ENCODE measurements at regions of chr9 and their contacts with region 1.

Region 1: GRCh38 chr9:136790927-136791641 is at the start of gene TMEM141:
- DNase-seq: peak; percentile 99
- ATAC-seq: peak; percentile 87
- H3K4me3 Mint-ChIP-seq: peak within 1 kb of the TSS; percentile 86
- H3K27ac Mint-ChIP-seq: peak within 1 kb of the TSS; percentile 90
- H3K4me1 Mint-ChIP-seq: peaks cover 21% of the 10 kb centered on the region
- H3K27me3 Mint-ChIP-seq: no peaks in the 10 kb centered on the region
- CTCF ChIP-seq: no peak
- total RNA-seq, gene TMEM141: 34.9 and 35.8 TPM in 2 replicates

Region 2: GRCh38 chr9:136807281-136808074 is 16.4 kb after region 1 on chr9 and contains the start of gene RABL6:
- CTCF ChIA-PET with region 1: interaction called, 3 read pairs
- POLR2A ChIA-PET with region 1: interaction called, 4 read pairs
- intact Hi-C with region 1: loop called (anchors 1 kb)
- DNase-seq: peak; percentile 86
- ATAC-seq: peak; percentile 87
- H3K4me3 Mint-ChIP-seq: peak within 1 kb of the TSS; percentile 88
- H3K27ac Mint-ChIP-seq: peak within 1 kb of the TSS; percentile 87
- H3K4me1 Mint-ChIP-seq: peaks cover 31% of the 10 kb centered on the region
- H3K27me3 Mint-ChIP-seq: no peaks in the 10 kb centered on the region
- CTCF ChIP-seq: no peak
- total RNA-seq, gene RABL6: 70.1 and 75.0 TPM in 2 replicates

Region 3: DNA sequence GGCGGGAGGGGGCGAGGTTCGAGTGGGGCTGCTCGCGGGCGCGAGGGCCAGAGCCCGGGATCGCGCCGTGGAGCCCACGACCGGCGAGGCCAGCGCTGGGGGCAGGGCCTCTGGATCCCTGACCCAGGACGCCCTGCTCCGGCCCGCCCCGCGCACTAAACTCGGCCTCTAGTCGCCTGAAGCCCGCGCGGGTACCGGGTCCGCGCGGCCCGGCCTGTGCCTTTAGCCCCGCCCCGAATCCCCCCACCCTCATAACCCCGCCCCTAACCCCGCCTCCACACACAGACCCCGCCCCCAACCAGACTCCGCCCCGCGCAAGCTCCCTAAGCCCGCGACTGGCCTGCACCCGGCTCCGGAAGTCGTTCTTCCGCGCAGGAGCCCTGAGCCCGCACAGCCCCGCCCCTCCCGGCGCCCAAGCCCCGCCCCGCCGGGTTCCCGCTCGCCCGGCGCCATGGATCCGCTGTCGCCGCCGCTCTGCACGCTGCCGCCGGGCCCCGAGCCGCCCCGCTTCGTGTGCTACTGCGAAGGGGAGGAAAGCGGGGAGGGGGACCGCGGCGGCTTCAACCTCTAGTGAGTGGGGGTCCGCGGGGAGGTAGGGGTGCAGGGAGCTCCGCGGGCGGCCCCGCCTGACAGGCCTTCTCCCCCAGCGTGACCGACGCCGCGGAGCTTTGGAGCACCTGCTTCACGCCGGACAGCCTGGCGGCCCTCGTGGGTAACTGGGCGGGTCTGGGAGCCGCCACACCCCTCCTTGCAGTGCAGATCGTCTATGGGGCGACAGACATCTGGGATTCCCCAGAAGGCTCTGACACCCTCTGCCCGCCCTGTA is 201.1 kb after region 1 on chr9 and contains the start of gene PAXX:
- CTCF ChIA-PET with region 1: no interaction called
- POLR2A ChIA-PET with region 1: no interaction called
- intact Hi-C with region 1: loop called (anchors 2 kb)
- DNase-seq: peak; percentile 94
- ATAC-seq: peak; percentile 91
- H3K4me3 Mint-ChIP-seq: peak within 1 kb of the TSS; percentile 86
- H3K27ac Mint-ChIP-seq: peak within 1 kb of the TSS; percentile 84
- H3K4me1 Mint-ChIP-seq: peaks cover 33% of the 10 kb centered on the region
- H3K27me3 Mint-ChIP-seq: peaks cover 6% of the 10 kb centered on the region
- CTCF ChIP-seq: no peak
- total RNA-seq, gene PAXX: 43.4 and 47.8 TPM in 2 replicates

Region 4: DNA sequence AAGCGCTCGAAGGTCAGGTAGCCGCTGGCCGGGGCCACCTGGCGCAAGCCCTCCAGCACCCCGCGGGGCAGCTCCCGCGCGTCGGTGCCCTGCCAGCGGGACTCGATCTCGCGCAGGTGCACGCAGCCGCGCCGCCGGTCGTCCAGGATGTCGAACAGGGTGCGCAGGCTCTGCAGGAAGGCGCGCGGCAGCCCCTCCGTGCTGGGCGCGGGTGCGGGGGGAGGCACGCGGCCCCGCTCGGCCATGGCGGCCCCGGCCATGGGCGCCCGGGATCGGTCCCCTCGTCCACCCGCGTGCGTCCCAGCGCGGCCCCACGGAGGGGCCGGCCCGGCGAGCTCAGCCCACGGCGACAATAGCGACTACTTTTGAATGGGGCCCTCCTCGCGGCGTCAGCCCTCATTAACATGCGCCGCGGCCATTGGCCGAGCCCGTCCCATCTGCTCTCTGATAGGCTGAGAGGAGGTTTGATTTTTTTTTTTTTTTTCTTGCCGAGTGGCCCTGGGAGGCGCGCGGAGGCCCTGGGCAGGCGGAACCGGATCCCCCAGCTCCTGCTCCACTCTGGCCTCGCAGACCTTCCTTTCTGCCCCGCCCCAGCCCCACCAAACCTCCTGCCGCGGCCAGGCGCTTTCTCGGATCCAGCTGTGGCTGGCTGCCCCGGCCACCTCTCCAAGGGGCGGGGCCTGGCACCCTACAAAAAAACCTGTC is 279.3 kb after region 1 on chr9 and contains the start of gene SAPCD2:
- CTCF ChIA-PET with region 1: interaction called, 11 read pairs
- POLR2A ChIA-PET with region 1: no interaction called
- intact Hi-C with region 1: no loop called
- DNase-seq: peak; percentile 80
- ATAC-seq: peak; percentile 83
- H3K4me3 Mint-ChIP-seq: peak within 1 kb of the TSS; percentile 72
- H3K27ac Mint-ChIP-seq: peak within 1 kb of the TSS; percentile 41
- H3K4me1 Mint-ChIP-seq: peaks cover 24% of the 10 kb centered on the region
- H3K27me3 Mint-ChIP-seq: peaks cover 4% of the 10 kb centered on the region
- CTCF ChIP-seq: no peak
- total RNA-seq, gene SAPCD2: 0.80 and 0.81 TPM in 2 replicates

Region 5: DNA sequence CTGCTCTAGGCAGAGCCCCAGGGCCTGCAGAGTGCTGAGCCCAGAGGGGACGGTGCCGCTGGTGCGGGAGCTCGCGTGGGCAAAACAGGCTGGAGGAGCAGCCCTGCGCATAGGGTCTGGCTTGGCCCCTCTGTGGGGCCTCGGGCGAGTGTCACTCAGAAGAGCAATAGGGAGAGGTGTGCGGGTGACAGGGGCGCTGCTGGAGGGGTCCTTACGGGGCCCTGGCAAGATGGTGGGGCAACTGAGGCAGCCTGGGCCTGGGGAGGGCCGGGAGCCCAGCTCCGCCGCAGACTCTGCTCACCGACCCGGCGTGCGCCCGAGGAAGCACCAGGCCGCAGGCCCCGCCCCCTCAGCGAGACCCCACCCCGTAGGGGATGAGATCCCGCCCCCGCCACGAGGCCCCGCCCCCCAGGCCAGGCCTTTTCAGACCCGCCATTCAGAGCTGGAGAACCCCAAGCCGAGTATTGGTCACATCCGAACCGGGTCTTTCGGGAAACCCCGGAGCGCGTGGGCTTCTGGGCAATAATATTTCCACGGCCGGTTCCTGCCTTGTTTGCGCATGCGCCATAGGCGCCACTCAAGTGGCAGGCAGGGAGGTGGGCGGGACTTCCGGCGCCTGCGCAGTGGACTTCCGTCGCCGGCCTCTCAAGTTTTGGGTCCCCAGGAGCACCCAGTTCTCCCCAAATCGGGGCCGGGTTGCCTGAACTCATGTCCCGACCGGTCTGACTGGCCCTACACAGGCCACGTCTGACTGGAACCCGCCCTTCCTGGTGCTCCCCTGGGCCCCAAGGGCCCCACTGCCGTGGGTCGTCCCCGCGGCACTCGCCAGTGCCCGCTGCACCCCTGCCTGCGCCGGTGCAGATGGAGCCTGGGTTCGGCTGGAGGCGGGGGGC is 432.2 kb after region 1 on chr9:
- CTCF ChIA-PET with region 1: no interaction called
- POLR2A ChIA-PET with region 1: no interaction called
- intact Hi-C with region 1: loop called (anchors 2 kb)
- DNase-seq: peak; percentile 97
- ATAC-seq: peak; percentile 93
- H3K4me3 Mint-ChIP-seq: peak overlapping the region; percentile 83
- H3K27ac Mint-ChIP-seq: peak overlapping the region; percentile 73
- H3K4me1 Mint-ChIP-seq: peaks cover 20% of the 10 kb centered on the region
- H3K27me3 Mint-ChIP-seq: peaks cover 2% of the 10 kb centered on the region
- CTCF ChIP-seq: no peak